Left cardiac atrium (tissue), 4 donors: ENCODE measurements at regions of chr16 and their contacts with region 1.

Region 1: DNA sequence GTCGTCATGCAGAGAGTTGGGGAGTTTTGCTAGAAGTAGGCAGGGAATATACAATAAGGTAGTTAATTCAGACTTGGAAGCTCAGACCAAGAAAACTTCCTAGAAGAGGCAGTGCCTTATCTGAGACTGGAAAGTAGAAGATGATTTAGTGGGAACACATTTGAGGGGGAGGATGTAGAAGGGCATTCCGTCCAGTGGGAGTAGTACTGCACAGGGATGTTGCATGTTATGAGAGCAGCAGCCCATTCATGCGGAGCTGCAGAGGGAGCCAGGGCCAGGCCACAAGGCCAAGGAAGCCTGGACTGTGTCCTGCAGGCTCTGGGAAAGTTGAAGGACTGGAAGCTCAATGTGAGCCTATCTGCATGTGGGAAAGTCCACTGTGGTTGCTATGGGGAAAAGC is 344.5 kb upstream of the EEF2KMT start:
- DNase-seq: no peak
- ATAC-seq: peak in 1 of 2 donors; percentile 74

Region 2: DNA sequence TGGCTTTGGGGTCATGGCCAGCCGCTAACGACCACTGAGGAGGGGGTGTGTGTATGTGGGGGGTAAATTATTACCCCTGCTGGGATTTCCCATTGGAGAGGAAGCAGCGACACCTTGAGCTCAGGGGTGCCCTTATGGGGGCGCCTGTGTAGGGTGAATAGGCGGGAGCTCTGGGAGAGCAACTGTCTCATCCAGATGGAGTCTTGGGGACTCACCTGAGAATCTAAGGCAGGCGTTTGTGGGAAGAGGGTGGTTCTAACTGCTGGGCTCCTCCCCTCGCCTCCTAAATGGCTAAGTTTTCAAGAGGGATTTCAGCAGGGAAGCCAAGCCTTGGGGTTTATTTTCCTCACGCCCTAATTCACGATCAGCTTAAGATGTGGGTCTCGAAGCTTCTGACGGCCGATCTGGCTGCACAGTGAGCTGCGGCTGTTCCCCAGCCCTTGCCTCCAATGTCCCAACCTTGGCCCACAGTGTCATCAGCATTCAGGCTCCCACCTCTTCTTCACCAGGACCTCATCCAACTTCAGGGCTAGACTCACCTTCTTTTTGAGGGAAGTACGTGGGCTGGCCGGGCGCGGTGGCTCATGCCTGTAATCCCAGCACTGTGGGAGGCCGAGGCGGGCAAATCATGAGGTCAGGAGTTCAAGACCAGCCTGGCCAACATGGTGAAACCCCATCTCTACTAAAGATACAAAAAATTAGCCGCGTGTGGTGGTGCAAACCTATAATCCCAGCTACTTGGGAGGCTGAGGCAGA is 207.6 kb before region 1 on chr16:
- intact Hi-C with region 1: no loop called
- DNase-seq: no peak
- ATAC-seq: no peak

Region 3: DNA sequence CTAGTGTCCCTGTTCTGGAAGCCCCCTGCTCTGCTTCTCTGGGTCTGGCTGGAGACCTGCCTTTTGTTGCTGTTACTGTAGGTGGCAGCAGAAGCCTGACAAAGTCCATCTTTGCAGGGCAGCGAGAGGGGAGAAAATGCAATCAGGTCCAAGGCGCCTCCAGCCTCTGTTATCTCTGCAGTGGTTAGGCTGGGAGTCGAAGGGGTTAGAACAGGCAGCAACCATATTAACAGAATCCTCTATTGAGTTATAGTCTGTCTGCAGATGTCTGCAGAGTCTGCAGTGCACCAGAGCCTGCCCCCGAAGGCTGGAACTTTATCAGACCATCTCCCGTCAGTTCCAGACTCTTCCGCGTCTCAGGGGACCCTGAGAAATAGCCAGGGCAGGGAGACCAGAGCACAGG is 60.4 kb after region 1 on chr16:
- intact Hi-C with region 1: loop called in 1 of 2 experiments (anchors 10 kb)
- DNase-seq: no peak
- ATAC-seq: peak in 1 of 2 donors; percentile 24